Activated CD4-positive, alpha-beta T cell treated with anti-CD3 and anti-CD28 coated beads, Interleukin-2, amount 10 ng/mL, durations not matched to agents 24 days and 14 days (primary cell): ENCODE measurements at regions of chr10 and their contacts with region 1.

Region 1: DNA sequence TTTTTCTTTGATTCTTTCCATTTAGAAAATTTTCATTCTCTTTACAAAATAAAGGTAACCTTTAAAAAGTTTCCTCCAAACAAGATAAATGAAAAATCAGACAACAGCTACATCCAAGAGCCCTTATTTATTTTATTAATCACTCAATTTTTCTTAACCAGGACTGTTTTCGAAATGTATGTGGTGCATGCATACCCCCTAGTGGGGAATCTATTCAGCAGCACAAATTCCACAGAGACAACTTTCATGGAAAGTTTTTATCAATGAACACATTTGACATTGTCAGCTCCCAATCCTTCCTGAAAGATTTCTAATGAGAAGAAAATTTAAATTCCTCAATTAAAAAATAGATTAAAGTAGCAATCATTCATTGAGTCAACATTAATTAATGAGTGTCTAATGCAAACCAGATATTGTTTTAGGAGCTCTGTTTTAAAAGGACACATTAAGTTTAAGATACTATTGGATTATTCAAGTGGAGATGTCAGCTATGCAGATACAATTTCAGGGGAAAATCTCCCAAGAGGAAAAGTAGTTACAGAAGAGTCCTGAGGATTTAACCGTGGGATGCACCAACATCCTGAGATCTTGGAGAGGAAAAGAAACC is 5.2 kb upstream of the HTR7 start:
- DNase-seq: no peak
- H3K4me3 Mint-ChIP-seq: no peak overlapping the region
- H3K27ac Mint-ChIP-seq: no peak overlapping the region
- H3K4me1 Mint-ChIP-seq: no peaks in the 10 kb centered on the region
- H3K27me3 Mint-ChIP-seq: peaks cover 75% of the 10 kb centered on the region

Region 2: GRCh38 chr10:89954787-89955566 is 908.0 kb before region 1 on chr10:
- intact Hi-C with region 1: loop called (anchors 10 kb)
- DNase-seq: no peak
- H3K4me3 Mint-ChIP-seq: no peak overlapping the region
- H3K27ac Mint-ChIP-seq: no peak overlapping the region
- H3K4me1 Mint-ChIP-seq: no peaks in the 10 kb centered on the region
- H3K27me3 Mint-ChIP-seq: peaks cover 6% of the 10 kb centered on the region

Region 3: GRCh38 chr10:90751107-90751997 is 111.7 kb before region 1 on chr10:
- intact Hi-C with region 1: loop called (anchors 1 kb)
- DNase-seq: peak; percentile 79
- H3K4me3 Mint-ChIP-seq: no peak overlapping the region
- H3K27ac Mint-ChIP-seq: no peak overlapping the region
- H3K4me1 Mint-ChIP-seq: no peaks in the 10 kb centered on the region
- H3K27me3 Mint-ChIP-seq: peaks cover 32% of the 10 kb centered on the region